ENCODE measurements at regions of chr2 and their contacts with region 1.

Region 1: DNA sequence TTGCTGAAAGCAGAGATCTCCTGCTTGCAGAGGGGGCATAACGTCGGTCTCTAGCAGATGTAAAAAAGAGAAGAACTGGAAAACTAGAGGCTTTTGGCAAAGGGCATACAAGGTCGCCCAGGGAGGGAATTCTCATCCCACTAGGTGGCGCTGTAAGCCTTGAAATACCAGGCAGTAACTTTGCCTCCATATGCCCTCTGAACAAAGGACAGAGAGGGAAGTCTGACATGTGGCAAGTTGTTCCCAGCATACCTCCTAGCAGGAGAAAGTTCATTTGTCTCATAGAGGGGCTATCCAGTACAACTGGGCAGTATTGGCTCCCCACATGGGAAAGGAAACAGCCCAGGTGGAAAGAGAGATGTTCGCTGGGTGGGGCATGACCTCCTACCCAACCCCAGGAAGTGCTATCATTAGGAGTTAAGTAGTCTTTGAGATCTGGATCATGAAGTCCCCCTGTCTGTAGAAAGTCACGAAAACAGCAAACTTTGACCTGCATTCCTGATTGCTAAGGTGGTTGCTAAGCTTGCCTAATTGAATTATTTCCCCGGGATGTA is 39.9 kb downstream of the STK17B start:
- DNase-seq: peak; percentile 45
- ATAC-seq: peak; percentile 92
- H3K4me3 ChIP-seq: no peak overlapping the region
- H3K27ac ChIP-seq: no peak overlapping the region
- H3K4me1 ChIP-seq: no peaks in the 10 kb centered on the region
- H3K27me3 ChIP-seq: no peaks in the 10 kb centered on the region
- CTCF ChIP-seq: peak; percentile 77

Region 2: DNA sequence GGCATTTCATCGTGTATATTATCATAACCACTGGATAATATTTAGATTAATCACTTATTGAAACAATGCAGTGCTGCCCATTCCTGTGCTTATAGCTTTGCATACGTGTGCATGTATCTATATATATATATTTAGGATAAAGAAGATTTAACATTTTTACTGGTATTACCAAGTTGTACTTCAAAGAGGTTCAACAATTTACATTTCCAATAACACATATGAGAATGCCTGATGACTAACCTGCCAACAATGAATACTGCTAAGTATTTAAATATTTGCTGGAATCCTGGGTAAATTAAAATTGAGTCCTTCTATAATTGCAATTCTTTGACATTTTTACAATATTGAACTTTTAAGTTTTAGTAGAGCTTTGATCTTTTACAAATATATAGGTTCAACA is 363.0 kb before region 1 on chr2:
- CTCF ChIA-PET with region 1: no interaction called
- POLR2A ChIA-PET with region 1: no interaction called
- in situ Hi-C with region 1: no loop called
- intact Hi-C with region 1: no loop called
- DNase-seq: no peak
- ATAC-seq: no peak
- H3K4me3 ChIP-seq: no peak overlapping the region
- H3K27ac ChIP-seq: no peak overlapping the region
- H3K4me1 ChIP-seq: no peaks in the 10 kb centered on the region
- H3K27me3 ChIP-seq: no peaks in the 10 kb centered on the region
- CTCF ChIP-seq: no peak

Region 3: DNA sequence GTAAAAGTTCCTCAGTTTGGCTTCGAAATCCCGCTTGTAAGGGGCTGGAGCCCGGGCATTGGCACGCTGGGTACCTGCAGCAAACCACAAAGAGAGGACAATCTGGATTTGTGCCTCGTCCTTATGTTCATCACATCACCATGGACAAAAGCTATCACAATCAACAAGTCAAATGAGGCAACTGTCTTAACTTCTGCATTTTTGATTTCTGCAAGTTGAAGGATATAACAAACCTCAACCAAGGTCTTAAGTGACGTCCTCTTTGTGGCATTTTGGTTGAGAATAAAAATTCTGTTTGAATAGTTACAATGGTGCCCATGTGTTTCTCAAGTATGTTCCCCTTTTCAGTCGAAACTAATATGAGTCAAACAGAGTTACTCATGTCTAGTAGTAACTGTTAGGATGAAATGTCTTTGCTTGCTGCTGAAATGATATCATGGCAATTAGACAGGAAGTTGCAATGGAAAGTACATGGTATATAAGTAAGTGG is 110.7 kb after region 1 on chr2:
- CTCF ChIA-PET with region 1: no interaction called
- POLR2A ChIA-PET with region 1: no interaction called
- in situ Hi-C with region 1: no loop called
- intact Hi-C with region 1: no loop called
- DNase-seq: no peak
- ATAC-seq: no peak
- H3K4me3 ChIP-seq: no peak overlapping the region
- H3K27ac ChIP-seq: no peak overlapping the region
- H3K4me1 ChIP-seq: no peaks in the 10 kb centered on the region
- H3K27me3 ChIP-seq: no peaks in the 10 kb centered on the region
- CTCF ChIP-seq: no peak

Region 4: GRCh38 chr2:196277002-196277401 is 145.5 kb after region 1 on chr2:
- CTCF ChIA-PET with region 1: no interaction called
- POLR2A ChIA-PET with region 1: interaction called, 3 read pairs
- in situ Hi-C with region 1: no loop called
- intact Hi-C with region 1: loop called (anchors 5 kb)
- DNase-seq: no peak
- ATAC-seq: no peak
- H3K4me3 ChIP-seq: no peak overlapping the region; a peak in 1 of 4 replicates
- H3K27ac ChIP-seq: no peak overlapping the region
- H3K4me1 ChIP-seq: peaks cover 6% of the 10 kb centered on the region
- H3K27me3 ChIP-seq: no peaks in the 10 kb centered on the region
- CTCF ChIP-seq: peak; percentile 63; the same call in 1 of the 2 replicates

Region 5: DNA sequence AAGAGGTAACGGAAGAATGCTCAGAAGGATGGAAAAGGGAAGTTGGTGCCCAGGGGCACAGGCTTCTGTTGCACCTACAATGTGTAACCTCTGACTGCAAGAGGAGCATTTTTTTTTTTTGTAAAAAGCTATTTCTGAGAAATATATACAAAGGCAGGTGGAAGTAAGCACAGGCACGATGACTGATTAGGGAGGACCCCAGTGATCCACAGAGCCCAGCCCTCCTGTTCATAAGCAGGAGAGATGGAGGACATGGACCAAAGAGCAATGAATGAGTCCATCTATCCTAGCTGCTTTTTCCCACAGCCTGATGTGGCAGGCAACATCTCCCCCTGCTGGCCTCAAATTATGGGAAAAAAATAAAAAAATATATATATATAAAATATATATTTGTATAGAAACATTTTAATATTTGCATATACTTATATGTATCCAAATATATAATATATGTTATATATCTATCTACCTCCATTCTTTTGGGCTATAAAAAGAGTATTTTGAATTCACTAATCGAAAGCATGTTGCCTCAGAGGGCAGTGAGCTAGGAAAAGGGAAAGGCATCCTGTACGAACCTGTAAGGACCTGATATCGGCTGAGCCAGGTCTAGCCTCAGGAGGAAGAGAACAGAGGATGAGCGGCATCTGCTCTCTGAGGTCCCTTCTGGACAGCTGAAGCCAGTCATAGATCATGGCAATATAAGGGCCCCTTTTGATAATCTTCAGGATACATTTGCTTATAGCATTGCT is 205.9 kb after region 1 on chr2:
- CTCF ChIA-PET with region 1: no interaction called
- POLR2A ChIA-PET with region 1: no interaction called
- in situ Hi-C with region 1: no loop called
- intact Hi-C with region 1: loop called (anchors 1 kb)
- DNase-seq: no peak
- ATAC-seq: no peak
- H3K4me3 ChIP-seq: no peak overlapping the region
- H3K27ac ChIP-seq: peak overlapping the region; percentile 87; the same call in 1 of the 2 replicates
- H3K4me1 ChIP-seq: peaks cover 38% of the 10 kb centered on the region
- H3K27me3 ChIP-seq: no peaks in the 10 kb centered on the region
- CTCF ChIP-seq: peak; percentile 51

Region 6: DNA sequence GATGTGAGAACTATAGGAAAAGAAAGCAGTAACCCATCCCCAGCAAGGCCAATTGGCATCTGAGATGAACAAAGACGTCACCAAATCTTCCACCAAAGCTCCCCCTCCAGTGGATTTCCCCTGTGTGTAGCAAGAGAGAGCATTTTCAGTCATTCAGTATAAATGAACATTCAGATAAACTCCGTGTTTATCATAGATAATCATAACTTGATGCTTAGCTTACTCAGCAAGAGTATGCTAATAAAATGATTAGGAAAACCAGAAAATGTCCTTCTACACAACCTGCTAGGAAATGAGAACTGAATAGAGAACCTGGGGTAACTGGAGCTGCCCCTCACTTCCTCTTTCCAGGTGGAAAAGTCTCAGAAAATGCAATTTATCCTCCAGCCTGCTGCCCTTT is 310.1 kb after region 1 on chr2:
- CTCF ChIA-PET with region 1: no interaction called
- POLR2A ChIA-PET with region 1: no interaction called
- in situ Hi-C with region 1: no loop called
- intact Hi-C with region 1: loop called (anchors 10 kb)
- DNase-seq: no peak
- ATAC-seq: no peak
- H3K4me3 ChIP-seq: no peak overlapping the region
- H3K27ac ChIP-seq: no peak overlapping the region
- H3K4me1 ChIP-seq: no peaks in the 10 kb centered on the region
- H3K27me3 ChIP-seq: no peaks in the 10 kb centered on the region
- CTCF ChIP-seq: no peak